PC-9 (cell line): ENCODE measurements at regions of chr22 and their contacts with region 1.

Region 1: GRCh38 chr22:32474635-32475467 is at the start of gene FBXO7:
- DNase-seq: peak; percentile 71 to 90
- H3K4me3 ChIP-seq: peak within 1 kb of the TSS; percentile 77
- H3K27ac ChIP-seq: peak within 1 kb of the TSS; percentile 81
- H3K4me1 ChIP-seq: peaks cover 40% of the 10 kb centered on the region
- H3K27me3 ChIP-seq: no peaks in the 10 kb centered on the region
- CTCF ChIP-seq: peak; percentile 59
- total RNA-seq, gene FBXO7: 76.0 and 81.9 TPM in 2 replicates

Region 2: GRCh38 chr22:31977141-31977841 is 497.6 kb before region 1 on chr22:
- CTCF ChIA-PET with region 1: no interaction called
- POLR2A ChIA-PET with region 1: interaction called, 3 read pairs
- intact Hi-C with region 1: loop called (anchors 1 kb)
- DNase-seq: peak; percentile 51 to 81
- H3K4me3 ChIP-seq: no peak overlapping the region
- H3K27ac ChIP-seq: no peak overlapping the region
- H3K4me1 ChIP-seq: no peaks in the 10 kb centered on the region
- H3K27me3 ChIP-seq: no peaks in the 10 kb centered on the region
- CTCF ChIP-seq: peak; percentile 92

Region 3: DNA sequence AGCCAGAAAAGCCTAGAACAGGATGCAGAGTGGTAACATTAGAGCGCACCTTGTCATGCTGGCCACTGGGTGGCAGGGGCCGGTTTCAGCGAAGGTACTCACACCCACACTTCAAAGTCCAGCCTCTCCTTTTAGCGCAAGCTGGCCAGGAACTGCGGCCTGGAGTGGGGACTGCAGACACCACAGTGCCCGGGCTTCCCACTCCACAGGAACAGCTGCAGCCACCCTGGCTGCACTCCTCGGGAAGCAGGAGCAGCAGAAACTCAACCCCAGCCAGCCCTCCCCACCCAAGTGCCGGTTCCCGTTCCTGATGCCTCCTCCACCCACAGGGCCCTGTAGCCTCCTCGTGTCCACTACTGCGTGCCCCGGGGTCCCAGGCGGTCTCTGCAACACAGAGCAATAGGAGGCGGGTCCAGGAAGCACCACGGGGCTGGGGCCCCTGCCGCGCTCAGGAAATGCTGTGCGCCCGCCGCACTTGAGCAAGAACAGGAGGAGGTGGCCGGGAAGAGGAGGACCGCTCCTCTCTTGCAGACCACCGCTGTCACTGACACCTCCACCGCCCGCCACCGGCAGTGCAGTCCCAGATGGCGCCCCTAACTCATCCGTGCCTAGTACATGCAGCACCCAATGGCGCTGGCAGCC is 272.2 kb before region 1 on chr22:
- CTCF ChIA-PET with region 1: no interaction called
- POLR2A ChIA-PET with region 1: no interaction called
- intact Hi-C with region 1: loop called (anchors 10 kb)
- DNase-seq: peak in 1 of 2 experiments; percentile 24
- H3K4me3 ChIP-seq: no peak overlapping the region
- H3K27ac ChIP-seq: no peak overlapping the region
- H3K4me1 ChIP-seq: no peaks in the 10 kb centered on the region
- H3K27me3 ChIP-seq: peaks cover 21% of the 10 kb centered on the region
- CTCF ChIP-seq: peak; percentile 67

Region 4: GRCh38 chr22:32219026-32219425 is 255.8 kb before region 1 on chr22:
- CTCF ChIA-PET with region 1: no interaction called
- POLR2A ChIA-PET with region 1: no interaction called
- intact Hi-C with region 1: no loop called
- DNase-seq: no peak
- H3K4me3 ChIP-seq: no peak overlapping the region
- H3K27ac ChIP-seq: no peak overlapping the region
- H3K4me1 ChIP-seq: no peaks in the 10 kb centered on the region
- H3K27me3 ChIP-seq: peaks cover 81% of the 10 kb centered on the region
- CTCF ChIP-seq: no peak

Region 5: DNA sequence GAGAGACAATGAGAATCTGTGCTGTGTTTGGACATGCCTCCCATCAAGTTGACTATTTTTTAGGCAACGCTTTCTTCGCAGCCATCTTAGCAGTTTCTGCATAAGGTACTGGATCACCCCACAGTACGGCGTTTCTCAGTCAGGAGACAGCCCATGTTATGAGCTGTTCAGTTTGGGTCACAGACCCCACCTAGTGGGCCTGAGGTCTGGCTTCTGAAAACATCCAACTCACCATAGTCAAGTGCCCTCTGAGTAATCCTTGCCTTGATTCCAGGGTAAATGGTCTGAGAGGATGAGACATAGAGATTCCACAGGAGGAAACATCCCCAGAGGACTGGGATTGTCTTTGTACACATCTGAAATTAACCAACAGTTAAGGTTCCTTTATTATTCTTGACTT is 17.8 kb before region 1 on chr22:
- CTCF ChIA-PET with region 1: no interaction called
- POLR2A ChIA-PET with region 1: no interaction called
- intact Hi-C with region 1: no loop called
- DNase-seq: no peak
- H3K4me3 ChIP-seq: no peak overlapping the region
- H3K27ac ChIP-seq: no peak overlapping the region
- H3K4me1 ChIP-seq: no peaks in the 10 kb centered on the region
- H3K27me3 ChIP-seq: peaks cover 46% of the 10 kb centered on the region
- CTCF ChIP-seq: no peak

Region 6: DNA sequence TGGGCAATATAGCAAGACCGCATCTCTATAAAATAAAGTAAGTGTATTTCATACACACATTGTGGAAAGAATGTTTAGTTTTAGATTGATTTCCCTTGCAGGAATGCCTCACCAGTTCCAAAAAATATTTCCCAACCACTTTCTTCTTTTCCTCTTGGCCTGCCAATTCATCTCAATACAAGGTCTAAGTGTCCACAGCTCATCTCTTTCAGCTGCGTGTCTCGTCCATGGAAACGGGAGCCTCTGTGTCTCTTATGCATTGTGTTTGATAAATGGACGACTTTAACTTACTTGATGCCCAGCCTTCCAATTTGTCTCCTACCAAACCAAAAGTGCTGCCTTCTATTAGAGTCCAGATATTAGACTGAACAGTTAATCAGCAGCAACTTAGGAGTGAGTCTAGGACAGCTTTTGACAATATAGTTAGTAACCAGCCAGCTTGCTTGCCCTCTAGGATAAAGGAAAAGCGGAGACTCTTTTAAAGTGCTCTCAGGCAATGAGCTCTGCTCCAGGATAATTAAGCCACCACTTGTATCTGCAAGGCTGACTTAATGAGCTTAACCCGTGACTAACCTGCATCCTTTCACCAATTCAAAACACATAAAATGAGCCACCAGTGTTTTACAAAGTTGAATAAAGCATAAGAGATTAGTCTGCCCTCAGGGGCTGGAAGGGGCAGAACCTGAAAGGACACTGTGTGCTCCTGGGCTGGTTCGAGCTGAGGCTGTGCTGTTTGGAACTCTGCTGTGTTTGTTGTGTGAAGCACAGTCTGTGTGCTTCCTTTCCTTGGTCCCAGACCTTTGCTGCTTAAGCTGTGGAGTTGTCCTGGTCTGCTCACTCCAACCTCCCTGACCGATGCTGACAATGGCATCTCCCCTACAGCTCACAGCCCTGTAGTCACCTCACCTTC is 27.2 kb after region 1 on chr22:
- CTCF ChIA-PET with region 1: no interaction called
- POLR2A ChIA-PET with region 1: no interaction called
- intact Hi-C with region 1: no loop called
- DNase-seq: no peak
- H3K4me3 ChIP-seq: no peak overlapping the region
- H3K27ac ChIP-seq: no peak overlapping the region
- H3K4me1 ChIP-seq: no peaks in the 10 kb centered on the region
- H3K27me3 ChIP-seq: no peaks in the 10 kb centered on the region
- CTCF ChIP-seq: no peak

Region 7: GRCh38 chr22:32985899-32986765 is 511.3 kb after region 1 on chr22:
- CTCF ChIA-PET with region 1: no interaction called
- POLR2A ChIA-PET with region 1: no interaction called
- intact Hi-C with region 1: loop called (anchors 5 kb)
- DNase-seq: peak; percentile 65 to 74
- H3K4me3 ChIP-seq: no peak overlapping the region
- H3K27ac ChIP-seq: no peak overlapping the region
- H3K4me1 ChIP-seq: peaks cover 27% of the 10 kb centered on the region
- H3K27me3 ChIP-seq: no peaks in the 10 kb centered on the region
- CTCF ChIP-seq: peak; percentile 93